Sigmoid colon (tissue), 7 donors: ENCODE measurements at regions of chr17 and their contacts with region 1.

Region 1: DNA sequence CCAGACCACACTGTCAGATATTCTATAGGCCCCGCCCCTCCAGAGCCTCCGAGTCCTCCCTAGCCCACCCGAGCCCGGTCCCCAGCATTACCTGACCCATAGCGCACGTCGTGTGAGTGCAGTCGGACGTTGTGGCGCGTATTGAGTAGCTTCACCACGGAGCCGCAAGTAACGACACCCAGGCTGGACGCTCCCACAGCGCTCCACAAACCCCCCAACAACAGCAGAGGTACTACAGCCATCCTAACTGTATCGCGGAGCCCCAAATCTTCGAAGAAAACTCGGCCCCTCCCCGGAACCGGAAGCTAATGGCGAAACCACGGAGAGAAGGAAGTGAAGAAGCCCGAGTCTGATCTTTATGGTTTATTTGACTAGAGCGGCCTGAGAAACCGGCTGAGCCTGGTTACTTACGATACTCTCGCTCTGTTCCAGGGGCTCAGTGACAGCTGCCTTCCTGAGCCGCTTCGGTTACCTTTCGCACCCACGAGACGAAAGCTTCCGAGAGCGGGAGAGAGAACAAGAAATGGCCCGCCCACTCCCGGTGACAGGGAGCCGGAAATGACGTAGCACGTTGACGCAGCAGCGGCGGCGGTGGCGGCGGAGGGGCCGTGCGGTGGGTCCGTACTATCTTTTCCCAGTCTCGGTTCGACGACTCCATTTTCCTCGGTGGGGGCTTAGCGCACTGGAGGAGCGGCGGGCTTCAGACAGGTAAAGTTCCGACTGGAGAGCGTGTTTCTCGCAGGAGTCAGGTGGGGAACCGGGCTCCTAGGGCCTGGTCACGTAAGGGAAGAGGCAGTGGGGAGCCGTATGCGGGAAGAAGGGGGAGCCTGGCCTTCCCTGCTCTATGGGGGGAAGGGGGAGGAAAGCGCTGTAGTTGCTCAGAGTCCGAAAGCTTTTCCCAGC is at the starts of genes SDF2 and SUPT6H:
- DNase-seq: peak; percentile 95
- H3K4me3 ChIP-seq: peak within 1 kb of the TSS; percentile 62 to 78 (median 74)
- H3K27ac ChIP-seq: peak within 1 kb of the TSS; percentile 93 to 96 (median 94)
- H3K4me1 ChIP-seq: peaks cover 0 to 39% (median 34%) of the 10 kb centered on the region in 4 donors
- H3K27me3 ChIP-seq: no peaks in the 10 kb centered on the region
- CTCF ChIP-seq: no peak
- EP300 ChIP-seq: no peak
- POLR2A ChIP-seq: peak; percentile 90 to 94
- total RNA-seq, gene SDF2: 41.8 to 61.8 (median 48.1) TPM
- total RNA-seq, gene SUPT6H: 49.0 to 75.6 (median 58.9) TPM

Region 2: GRCh38 chr17:28346746-28347246 is 315.1 kb before region 1 on chr17:
- intact Hi-C with region 1: no loop called
- DNase-seq: no peak
- H3K4me3 ChIP-seq: no peak overlapping the region
- H3K27ac ChIP-seq: peak overlapping the region in 2 of 4 donors; percentile 24 to 40
- H3K4me1 ChIP-seq: peaks cover 0 to 11% (median 0%) of the 10 kb centered on the region in 4 donors
- H3K27me3 ChIP-seq: no peaks in the 10 kb centered on the region
- CTCF ChIP-seq: no peak
- EP300 ChIP-seq: no peak
- POLR2A ChIP-seq: no peak

Region 3: GRCh38 chr17:28710861-28711722 is 49.2 kb after region 1 on chr17:
- intact Hi-C with region 1: loop called (anchors 5 kb)
- DNase-seq: peak; percentile 94
- H3K4me3 ChIP-seq: peak overlapping the region; percentile 54 to 62 (median 60)
- H3K27ac ChIP-seq: peak overlapping the region; percentile 92 to 94 (median 92)
- H3K4me1 ChIP-seq: peaks cover 0 to 27% (median 20%) of the 10 kb centered on the region in 4 donors
- H3K27me3 ChIP-seq: no peaks in the 10 kb centered on the region
- CTCF ChIP-seq: no peak
- EP300 ChIP-seq: no peak
- POLR2A ChIP-seq: peak; percentile 65 to 81

Region 4: DNA sequence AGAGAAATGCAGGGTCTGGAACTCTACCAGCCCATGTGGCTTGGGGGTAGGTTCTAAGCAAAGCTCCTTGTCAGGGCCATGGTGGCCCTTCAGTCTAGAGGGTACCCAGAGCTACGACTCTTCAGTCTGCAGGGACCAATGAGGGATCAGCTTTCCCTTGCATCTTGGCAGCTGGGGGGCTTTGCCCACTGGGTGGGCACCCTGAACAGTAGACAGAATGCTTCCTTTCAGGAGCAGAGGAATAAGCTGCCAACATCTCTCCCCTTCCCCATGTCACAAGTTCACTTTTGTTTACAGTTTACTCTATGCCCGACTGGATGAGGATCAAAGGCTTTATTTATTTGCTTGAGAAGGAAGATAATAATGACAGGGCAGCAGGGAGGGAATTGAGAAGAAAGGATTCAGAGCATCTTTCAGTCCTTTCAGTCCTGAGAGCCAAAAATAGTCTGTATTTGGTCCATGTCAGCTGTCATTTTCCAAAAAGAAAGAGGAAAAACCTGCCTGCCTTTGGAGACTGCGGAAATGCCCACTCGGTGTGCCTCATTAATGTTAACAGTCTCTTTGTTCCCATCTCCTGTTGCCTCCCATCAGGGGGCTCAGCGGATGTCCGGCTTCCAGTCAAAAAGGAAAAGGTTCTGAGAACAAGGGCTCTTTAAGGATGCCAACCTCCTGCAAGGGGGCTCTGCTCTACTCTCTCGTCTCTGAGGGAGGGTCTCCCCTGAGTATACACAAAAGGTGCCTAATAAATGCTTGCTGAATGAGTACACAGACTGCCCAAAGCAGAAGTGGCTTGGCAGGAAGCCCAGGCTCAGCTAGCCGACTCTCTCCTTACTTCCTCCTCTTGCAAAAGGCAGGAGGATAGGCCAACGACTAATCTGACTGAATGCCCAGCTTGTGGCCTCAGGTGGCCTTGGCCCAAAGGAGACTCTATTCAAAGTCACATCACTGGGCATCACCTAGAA is 99.0 kb after region 1 on chr17:
- intact Hi-C with region 1: no loop called
- DNase-seq: peak; percentile 78
- H3K4me3 ChIP-seq: no peak overlapping the region
- H3K27ac ChIP-seq: peak overlapping the region in 1 of 4 donors; percentile 11
- H3K4me1 ChIP-seq: peaks cover 0 to 18% (median 6%) of the 10 kb centered on the region in 4 donors
- H3K27me3 ChIP-seq: no peaks in the 10 kb centered on the region
- CTCF ChIP-seq: no peak
- EP300 ChIP-seq: no peak
- POLR2A ChIP-seq: no peak